Activated naive CD4-positive, alpha-beta T cell treated with anti-CD3 and anti-CD28 coated beads for 36 hours (primary cell): ENCODE measurements at regions of chr17 and their contacts with region 1.

Region 1: GRCh38 chr17:65556014-65556909 is 5.2 kb downstream of the AXIN2 start:
- DNase-seq: peak; percentile 95
- H3K4me3 Mint-ChIP-seq: no peak overlapping the region
- H3K27ac Mint-ChIP-seq: no peak overlapping the region
- H3K4me1 Mint-ChIP-seq: peaks cover 35% of the 10 kb centered on the region
- H3K27me3 Mint-ChIP-seq: peaks cover 2% of the 10 kb centered on the region

Region 2: DNA sequence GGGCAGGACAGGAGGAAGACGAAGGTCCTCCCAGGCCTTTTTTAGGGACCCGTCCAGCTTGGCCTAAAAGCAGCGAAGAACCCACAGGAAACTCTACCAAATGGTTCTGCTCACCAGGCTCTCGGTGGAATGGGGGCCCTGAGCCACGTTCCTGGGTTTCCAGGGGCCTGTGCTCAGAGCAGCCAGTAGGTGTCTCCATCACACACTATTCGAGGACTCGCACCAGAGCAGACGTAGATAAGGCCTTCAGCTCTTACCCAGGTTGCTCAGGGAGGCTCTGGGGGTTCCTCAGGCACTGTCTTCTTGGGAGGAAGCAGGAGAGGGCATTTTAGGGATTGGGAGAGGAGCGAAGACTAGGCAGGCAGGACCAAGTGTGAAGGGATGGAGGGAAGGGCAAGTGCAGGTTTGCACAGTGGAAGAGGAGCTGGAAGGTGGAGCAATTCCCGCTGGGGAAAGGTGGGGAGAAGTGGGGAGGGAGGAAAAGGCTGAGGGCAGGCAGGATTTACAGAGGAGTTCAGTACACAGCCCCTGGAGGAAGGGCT is 262.0 kb before region 1 on chr17:
- CTCF ChIA-PET with region 1: interaction called, 22 read pairs
- intact Hi-C with region 1: loop called (anchors 1 kb)
- DNase-seq: peak; percentile 76
- H3K4me3 Mint-ChIP-seq: no peak overlapping the region
- H3K27ac Mint-ChIP-seq: no peak overlapping the region
- H3K4me1 Mint-ChIP-seq: peaks cover 4% of the 10 kb centered on the region
- H3K27me3 Mint-ChIP-seq: no peaks in the 10 kb centered on the region

Region 3: GRCh38 chr17:65455972-65456343 is 100.3 kb before region 1 on chr17:
- CTCF ChIA-PET with region 1: interaction called, 6 read pairs
- intact Hi-C with region 1: loop called (anchors 1 kb)
- DNase-seq: peak; percentile 50
- H3K4me3 Mint-ChIP-seq: no peak overlapping the region
- H3K27ac Mint-ChIP-seq: no peak overlapping the region
- H3K4me1 Mint-ChIP-seq: peaks cover 3% of the 10 kb centered on the region
- H3K27me3 Mint-ChIP-seq: no peaks in the 10 kb centered on the region

Region 4: DNA sequence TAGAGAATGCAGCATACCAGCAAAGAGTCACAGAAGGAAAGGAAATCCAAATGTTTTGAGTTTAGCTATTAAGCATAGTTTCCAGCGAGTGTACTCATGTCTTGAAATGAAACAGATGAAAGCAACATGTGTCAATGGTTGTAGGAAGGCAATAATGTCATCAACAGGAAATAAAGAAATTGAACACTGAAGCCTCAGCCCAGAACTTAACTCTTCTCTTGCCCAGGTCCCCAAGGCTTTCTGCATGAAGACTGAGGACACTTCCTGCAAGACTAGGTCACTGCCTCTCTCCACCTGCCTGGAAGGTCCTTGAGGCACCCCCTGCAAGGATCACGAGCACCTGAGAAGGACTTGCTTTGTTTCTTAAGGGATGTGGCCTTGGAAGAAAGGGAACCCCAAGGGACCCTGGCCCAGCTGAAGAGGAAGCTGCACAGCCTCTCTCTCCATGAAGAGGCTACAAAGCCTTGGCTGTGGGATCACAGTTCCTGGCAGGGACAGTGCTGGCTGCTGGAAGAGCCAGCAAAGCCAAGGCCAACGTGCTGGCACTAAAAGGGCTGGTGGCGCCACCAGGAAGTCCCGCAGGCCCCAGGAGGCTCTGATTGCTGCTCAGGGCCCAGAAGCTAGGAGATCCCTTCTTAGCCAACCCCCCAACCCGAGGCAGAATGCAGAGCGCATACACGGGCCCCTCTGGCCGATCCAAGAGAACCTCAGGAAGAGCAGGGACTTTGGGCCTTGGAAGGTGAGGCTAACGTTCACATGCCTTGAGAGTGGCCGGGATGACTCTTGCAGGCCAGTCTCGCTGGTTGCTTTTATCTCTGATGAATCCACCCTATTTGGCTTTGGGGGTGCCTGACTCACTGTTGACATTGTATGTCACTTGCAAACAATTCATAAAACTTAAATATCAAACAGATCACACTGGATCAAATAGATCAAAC is 28.6 kb after region 1 on chr17:
- CTCF ChIA-PET with region 1: interaction called, 12 read pairs
- intact Hi-C with region 1: loop called (anchors 2 kb)
- DNase-seq: peak; percentile 18
- H3K4me3 Mint-ChIP-seq: no peak overlapping the region
- H3K27ac Mint-ChIP-seq: peak overlapping the region; percentile 51
- H3K4me1 Mint-ChIP-seq: peaks cover 47% of the 10 kb centered on the region
- H3K27me3 Mint-ChIP-seq: no peaks in the 10 kb centered on the region

Region 5: GRCh38 chr17:65794572-65794971 is 238.3 kb after region 1 on chr17:
- CTCF ChIA-PET with region 1: interaction called, 8 read pairs
- intact Hi-C with region 1: loop called (anchors 2 kb)
- DNase-seq: no peak
- H3K4me3 Mint-ChIP-seq: no peak overlapping the region
- H3K27ac Mint-ChIP-seq: no peak overlapping the region
- H3K4me1 Mint-ChIP-seq: peaks cover 12% of the 10 kb centered on the region
- H3K27me3 Mint-ChIP-seq: peaks cover 2% of the 10 kb centered on the region